CD8-positive, alpha-beta memory T cell (primary cell): ENCODE measurements at regions of chr11 and their contacts with region 1.

Region 1: DNA sequence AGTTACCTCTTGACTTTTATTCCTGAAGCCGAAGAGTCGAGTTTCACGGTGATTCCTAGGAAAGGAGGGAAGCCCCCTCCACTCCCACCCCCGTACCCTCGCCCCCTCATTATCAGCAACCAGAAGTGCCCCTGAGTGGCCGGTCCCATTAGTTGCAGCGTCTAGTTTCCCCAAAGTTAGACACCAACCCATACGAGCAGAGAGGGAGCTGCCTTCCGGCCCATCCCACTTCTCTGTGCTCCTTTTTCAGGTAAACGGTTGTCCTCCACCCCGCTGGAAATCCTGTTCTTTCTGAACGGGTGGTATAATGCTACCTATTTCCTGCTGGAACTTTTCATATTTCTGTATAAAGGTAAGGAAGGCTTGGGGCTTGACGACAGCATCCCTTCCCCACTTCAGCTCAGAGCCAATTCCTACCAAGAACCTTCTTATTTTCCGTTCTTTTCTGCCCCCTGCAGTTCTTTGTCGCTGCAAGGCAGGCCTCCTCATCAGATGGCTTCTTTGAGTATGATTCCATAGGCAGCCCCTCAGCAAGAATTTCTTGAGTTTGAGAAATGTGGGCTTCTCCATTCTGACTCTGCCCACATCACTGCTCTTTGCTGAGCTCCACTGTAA is 701 bp downstream of the TMEM216 start:
- DNase-seq: peak in 1 of 5 donors; percentile 41
- H3K4me3 ChIP-seq: peak overlapping the region; percentile 76
- H3K4me3 Mint-ChIP-seq: peak overlapping the region; percentile 91 to 97 (median 95)
- H3K27ac ChIP-seq: peak overlapping the region; percentile 67
- H3K27ac Mint-ChIP-seq: peak overlapping the region; percentile 92 to 100 (median 98)
- H3K4me1 ChIP-seq: peaks cover 21% of the 10 kb centered on the region
- H3K4me1 Mint-ChIP-seq: peaks cover 19 to 30% (median 23%) of the 10 kb centered on the region in 3 donors
- H3K27me3 ChIP-seq: no peaks in the 10 kb centered on the region
- H3K27me3 Mint-ChIP-seq: no peaks in the 10 kb centered on the region

Region 2: GRCh38 chr11:61361686-61362541 is 31.2 kb before region 1 on chr11 and contains the starts of genes CYB561A3 and TMEM138:
- CTCF ChIA-PET with region 1: interaction called, 12 read pairs
- POLR2A ChIA-PET with region 1: interaction called, 23 read pairs
- DNase-seq: peak; percentile 79 to 92 (median 84)
- H3K4me3 ChIP-seq: peak within 1 kb of the TSS; percentile 91
- H3K4me3 Mint-ChIP-seq: peak within 1 kb of the TSS; percentile 95 to 99 (median 96)
- H3K27ac ChIP-seq: peak within 1 kb of the TSS; percentile 88
- H3K27ac Mint-ChIP-seq: peak within 1 kb of the TSS; percentile 91 to 100 (median 98)
- H3K4me1 ChIP-seq: peaks cover 29% of the 10 kb centered on the region
- H3K4me1 Mint-ChIP-seq: peaks cover 29 to 44% (median 39%) of the 10 kb centered on the region in 3 donors
- H3K27me3 ChIP-seq: no peaks in the 10 kb centered on the region
- H3K27me3 Mint-ChIP-seq: no peaks in the 10 kb centered on the region
- total RNA-seq, gene CYB561A3: 53.0 to 53.7 TPM
- total RNA-seq, gene TMEM138: 74.4 to 75.1 TPM